ENCODE measurements at regions of chr2 and their contacts with region 1.

Region 1: DNA sequence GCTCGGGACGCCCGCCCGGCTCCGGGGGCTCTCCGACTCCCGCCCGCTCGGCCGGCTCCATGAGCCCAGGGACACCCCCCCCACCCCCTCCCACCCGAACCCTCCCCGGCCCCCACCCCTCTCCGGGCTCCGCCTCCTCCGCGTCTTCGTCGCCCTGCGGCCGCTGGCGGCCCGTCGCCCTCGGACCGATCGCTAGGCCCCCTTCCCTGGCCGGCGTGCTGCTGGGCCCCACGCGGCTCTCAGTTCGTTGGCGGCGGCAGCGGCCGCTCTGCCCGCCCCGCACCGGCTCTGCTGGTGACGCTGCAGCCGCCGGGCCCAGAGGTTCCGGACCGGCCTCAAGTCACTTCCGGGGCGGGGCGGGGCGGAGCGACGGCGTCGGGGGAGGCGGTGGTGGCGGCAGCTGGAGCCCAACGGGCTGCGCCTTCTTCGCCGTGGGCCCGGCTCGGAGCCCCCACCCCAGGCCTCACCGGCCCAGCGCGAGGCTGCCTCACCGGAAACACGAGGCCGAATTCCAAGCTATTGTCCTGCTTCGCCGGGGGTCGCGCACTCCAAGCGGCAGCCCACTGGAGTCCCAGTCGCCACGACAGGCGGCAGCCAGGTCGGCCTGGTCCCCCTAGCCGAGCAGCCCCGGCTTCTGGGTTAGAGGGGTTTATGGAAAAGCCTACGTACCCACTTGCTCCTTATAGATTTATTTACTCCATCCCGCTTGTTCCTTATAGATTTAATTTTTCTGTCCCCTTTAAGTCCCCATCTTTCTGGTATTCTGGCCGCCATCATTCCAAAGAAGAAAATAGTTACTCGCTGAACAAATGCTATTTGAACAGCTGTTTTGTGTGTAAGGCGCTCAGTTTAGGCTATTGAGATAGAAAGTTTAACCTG is at the start of gene PSME4:
- DNase-seq: peak; percentile 95
- H3K4me3 Mint-ChIP-seq: peak within 1 kb of the TSS; percentile 83
- H3K27ac Mint-ChIP-seq: peak within 1 kb of the TSS; percentile 86
- H3K4me1 Mint-ChIP-seq: peaks cover 38% of the 10 kb centered on the region
- H3K27me3 Mint-ChIP-seq: no peaks in the 10 kb centered on the region
- total RNA-seq, gene PSME4: 31.5 to 38.8 TPM

Region 2: GRCh38 chr2:53786705-53787612 is 184.0 kb before region 1 on chr2 and contains the starts of genes ASB3 and ERLEC1:
- CTCF ChIA-PET with region 1: no interaction called
- intact Hi-C with region 1: loop called (anchors 1 kb)
- DNase-seq: peak; percentile 90
- H3K4me3 Mint-ChIP-seq: peak within 1 kb of the TSS; percentile 95
- H3K27ac Mint-ChIP-seq: peak within 1 kb of the TSS; percentile 89
- H3K4me1 Mint-ChIP-seq: peaks cover 50% of the 10 kb centered on the region
- H3K27me3 Mint-ChIP-seq: no peaks in the 10 kb centered on the region
- total RNA-seq, gene ASB3: 17.2 to 19.1 TPM
- total RNA-seq, gene ERLEC1: 16.7 to 18.5 TPM

Region 3: GRCh38 chr2:53949457-53949856 is 21.5 kb before region 1 on chr2:
- CTCF ChIA-PET with region 1: interaction called, 3 read pairs
- intact Hi-C with region 1: loop called (anchors 2 kb)
- DNase-seq: no peak
- H3K4me3 Mint-ChIP-seq: no peak overlapping the region
- H3K27ac Mint-ChIP-seq: no peak overlapping the region
- H3K4me1 Mint-ChIP-seq: peaks cover 29% of the 10 kb centered on the region
- H3K27me3 Mint-ChIP-seq: no peaks in the 10 kb centered on the region

Region 4: DNA sequence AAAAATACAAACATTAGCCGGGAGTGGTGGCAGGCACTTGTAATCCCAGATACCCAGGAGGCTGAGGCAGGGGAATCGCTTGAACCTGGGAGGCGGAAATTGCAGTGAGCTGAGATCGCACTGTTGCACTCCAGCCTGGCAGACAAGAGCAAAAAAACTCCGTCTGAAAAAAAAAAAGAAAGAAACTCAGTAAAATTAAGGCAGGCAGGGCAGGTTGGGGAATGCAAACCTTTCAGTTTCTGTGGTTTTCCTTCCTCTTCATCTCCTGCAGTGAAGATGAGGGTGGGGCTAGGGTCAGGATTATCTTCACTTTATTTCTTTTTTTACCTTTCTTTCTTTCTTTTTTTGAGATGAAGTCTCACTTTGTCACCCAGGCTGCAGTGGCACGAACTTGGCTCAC is 43.0 kb after region 1 on chr2:
- CTCF ChIA-PET with region 1: interaction called, 4 read pairs
- intact Hi-C with region 1: loop called (anchors 1 kb)
- DNase-seq: no peak
- H3K4me3 Mint-ChIP-seq: peak overlapping the region; percentile 30
- H3K27ac Mint-ChIP-seq: no peak overlapping the region
- H3K4me1 Mint-ChIP-seq: peaks cover 32% of the 10 kb centered on the region
- H3K27me3 Mint-ChIP-seq: no peaks in the 10 kb centered on the region

Region 5: GRCh38 chr2:54052825-54053718 is 82.1 kb after region 1 on chr2:
- CTCF ChIA-PET with region 1: no interaction called
- intact Hi-C with region 1: loop called (anchors 1 kb)
- DNase-seq: no peak
- H3K4me3 Mint-ChIP-seq: no peak overlapping the region
- H3K27ac Mint-ChIP-seq: peak overlapping the region; percentile 28
- H3K4me1 Mint-ChIP-seq: peaks cover 27% of the 10 kb centered on the region
- H3K27me3 Mint-ChIP-seq: no peaks in the 10 kb centered on the region

Region 6: GRCh38 chr2:54212456-54212855 is 241.5 kb after region 1 on chr2:
- CTCF ChIA-PET with region 1: no interaction called
- intact Hi-C with region 1: no loop called
- DNase-seq: no peak
- H3K4me3 Mint-ChIP-seq: no peak overlapping the region
- H3K27ac Mint-ChIP-seq: no peak overlapping the region
- H3K4me1 Mint-ChIP-seq: no peaks in the 10 kb centered on the region
- H3K27me3 Mint-ChIP-seq: no peaks in the 10 kb centered on the region

Region 7: GRCh38 chr2:55232084-55232862 is 1261.3 kb after region 1 on chr2 and contains the starts of genes CLHC1 and RPS27A:
- CTCF ChIA-PET with region 1: no interaction called
- intact Hi-C with region 1: loop called (anchors 2 kb)
- DNase-seq: peak; percentile 94
- H3K4me3 Mint-ChIP-seq: peak within 1 kb of the TSS; percentile 97
- H3K27ac Mint-ChIP-seq: peak within 1 kb of the TSS; percentile 95
- H3K4me1 Mint-ChIP-seq: peaks cover 52% of the 10 kb centered on the region
- H3K27me3 Mint-ChIP-seq: no peaks in the 10 kb centered on the region
- total RNA-seq, gene CLHC1: 2.4 to 3.1 TPM
- total RNA-seq, gene RPS27A: 1,468 to 1,556 TPM

Measured in activated naive CD4-positive, alpha-beta T cell treated with anti-CD3 and anti-CD28 coated beads for 36 hours (primary cell).